ENCODE measurements at regions of chr15 and their contacts with region 1.

Region 1: GRCh38 chr15:97903971-97904572 is 56.4 kb upstream of the ARRDC4 start:
- H3K4me3 ChIP-seq: no peak overlapping the region
- H3K27ac ChIP-seq: no peak overlapping the region
- H3K4me1 ChIP-seq: no peaks in the 10 kb centered on the region
- CTCF ChIP-seq: peak; percentile 88

Region 2: DNA sequence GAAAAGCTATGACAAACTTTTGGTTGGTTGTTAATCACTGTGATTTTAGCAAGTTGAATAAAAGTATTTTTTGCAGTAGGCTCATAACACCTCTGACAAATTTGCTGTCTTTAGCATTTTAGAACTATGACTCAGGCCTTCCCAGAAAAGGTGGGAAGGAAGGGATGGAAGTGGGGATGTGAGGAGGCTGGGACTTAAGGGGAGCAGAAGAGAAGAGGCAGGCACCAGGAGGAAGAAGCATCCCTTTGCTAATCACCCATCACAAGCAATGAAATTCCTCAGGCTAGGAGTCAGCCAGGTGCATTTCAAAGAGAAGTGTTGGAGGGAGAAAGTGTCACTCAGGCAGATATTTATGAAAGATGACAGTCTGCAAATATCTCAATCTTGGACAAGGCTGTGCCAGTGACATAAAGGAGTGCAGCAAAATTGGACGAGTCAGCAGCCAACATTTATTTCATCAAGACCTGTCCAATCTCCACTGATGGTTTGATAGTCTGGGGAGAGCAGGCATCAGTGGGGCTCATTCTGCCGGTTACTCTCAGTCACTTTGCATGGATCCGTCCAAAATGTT is 280.9 kb before region 1 on chr15:
- CTCF ChIA-PET with region 1: no interaction called
- POLR2A ChIA-PET with region 1: no interaction called
- H3K4me3 ChIP-seq: no peak overlapping the region
- H3K27ac ChIP-seq: no peak overlapping the region
- H3K4me1 ChIP-seq: no peaks in the 10 kb centered on the region
- CTCF ChIP-seq: no peak

Region 3: DNA sequence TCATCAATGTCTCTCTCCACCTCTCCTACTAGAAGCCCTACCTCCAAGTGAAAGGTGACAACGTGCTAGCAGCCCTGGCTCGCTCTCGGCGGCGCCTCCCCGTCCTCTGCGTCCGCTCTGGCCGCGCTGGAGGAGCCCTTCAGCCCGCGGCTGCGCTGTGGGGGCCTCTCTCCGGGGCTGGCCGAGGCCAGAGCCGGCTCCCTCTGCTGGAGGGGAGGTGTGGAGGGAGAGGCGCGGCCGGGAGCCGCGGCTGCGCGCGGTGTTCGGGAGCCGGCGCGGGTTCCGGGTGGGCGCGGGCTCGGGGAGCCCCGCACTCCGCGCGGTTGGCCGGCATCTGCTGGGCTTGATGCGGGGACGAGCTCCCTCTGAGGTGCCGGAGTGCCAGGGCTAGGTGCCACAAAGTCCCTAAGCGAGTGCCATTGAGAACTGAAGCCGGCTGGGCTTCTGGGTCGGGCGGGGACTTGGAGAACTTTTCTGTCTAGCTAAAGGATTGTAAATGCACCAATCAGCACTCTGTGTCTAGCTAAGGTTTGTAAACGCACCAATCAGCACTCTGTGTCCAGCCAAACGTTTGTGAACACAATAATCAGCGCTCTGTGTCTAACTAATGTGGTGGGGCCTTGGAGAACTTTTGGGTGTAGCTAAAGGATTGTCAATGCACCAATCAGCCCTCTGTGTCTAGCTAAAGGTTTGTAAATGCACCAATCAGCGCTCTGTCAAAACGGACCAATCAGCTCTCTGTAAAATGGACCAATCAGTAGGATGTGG is 28.4 kb before region 1 on chr15:
- CTCF ChIA-PET with region 1: no interaction called
- POLR2A ChIA-PET with region 1: no interaction called
- H3K4me3 ChIP-seq: no peak overlapping the region
- H3K27ac ChIP-seq: no peak overlapping the region
- H3K4me1 ChIP-seq: no peaks in the 10 kb centered on the region
- CTCF ChIP-seq: no peak

Region 4: GRCh38 chr15:97890307-97890706 is 13.8 kb before region 1 on chr15:
- CTCF ChIA-PET with region 1: interaction called, 19 read pairs
- POLR2A ChIA-PET with region 1: no interaction called
- H3K4me3 ChIP-seq: no peak overlapping the region
- H3K27ac ChIP-seq: no peak overlapping the region
- H3K4me1 ChIP-seq: no peaks in the 10 kb centered on the region
- CTCF ChIP-seq: no peak

Region 5: DNA sequence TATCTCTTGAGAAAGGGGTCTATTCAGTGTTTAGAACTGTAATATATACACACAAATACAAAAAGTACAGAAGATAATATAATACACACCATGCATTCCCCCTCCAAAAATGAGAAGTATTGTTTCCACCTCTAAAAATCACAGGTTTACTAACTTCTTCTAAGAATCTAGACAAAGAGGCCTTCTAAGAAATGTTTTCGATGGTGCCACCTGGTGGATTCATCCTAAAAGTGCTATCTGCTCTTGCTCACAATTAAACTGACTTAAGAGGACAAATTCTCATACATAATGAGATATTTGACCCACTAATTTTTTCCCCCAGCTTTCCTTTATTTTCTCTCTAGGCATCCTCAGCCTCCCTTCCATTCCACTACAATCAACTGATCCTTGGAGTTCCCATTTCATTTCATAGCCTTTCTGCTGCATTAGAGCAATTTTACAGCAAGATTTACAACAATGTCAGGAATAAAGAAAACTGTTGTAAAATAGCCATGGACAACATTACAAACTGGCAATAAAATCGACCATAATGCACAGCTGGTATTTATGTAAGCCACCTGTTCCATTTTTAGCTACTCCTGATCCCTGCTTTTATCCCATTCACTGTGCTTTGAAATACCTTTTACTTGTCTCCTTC is 181.0 kb after region 1 on chr15:
- CTCF ChIA-PET with region 1: interaction called, 34 read pairs
- POLR2A ChIA-PET with region 1: no interaction called
- H3K4me3 ChIP-seq: no peak overlapping the region
- H3K27ac ChIP-seq: no peak overlapping the region
- H3K4me1 ChIP-seq: 0 out of 2 replicates have a peak, but pooled peaks cover 3% of the 10 kb centered on the region
- CTCF ChIP-seq: no peak